CD8-positive, alpha-beta T cell (primary cell): ENCODE measurements at regions of chr6 and their contacts with region 1.

Region 1: DNA sequence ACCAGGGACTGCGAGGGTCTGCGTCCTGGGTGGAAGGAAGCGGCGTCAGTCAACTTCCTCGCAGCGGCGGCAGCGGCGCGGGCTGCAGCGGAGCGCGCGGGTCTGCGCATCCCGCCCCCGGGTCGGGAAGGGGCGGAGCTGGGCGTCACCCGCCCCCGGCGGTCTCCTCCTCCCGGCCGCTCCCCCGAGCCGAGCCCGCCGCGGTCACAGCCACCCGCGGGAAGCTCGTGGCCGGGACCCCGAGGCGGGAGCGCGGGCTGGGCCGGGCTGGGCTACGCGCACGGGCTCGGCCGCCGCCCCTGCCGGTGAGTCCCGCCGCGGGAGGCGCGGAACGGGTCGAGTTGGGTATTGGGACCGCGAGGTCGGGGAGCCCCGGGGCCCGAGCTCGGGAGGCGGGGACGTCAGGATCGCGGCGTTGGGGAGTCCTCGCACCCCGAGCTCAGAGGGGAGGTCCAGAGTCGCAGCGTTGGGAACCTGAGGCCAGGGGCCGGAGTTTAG is at the start of gene PAQR8:
- DNase-seq: peak; percentile 62 to 93 (median 80)
- ATAC-seq: peak; percentile 88
- H3K4me3 ChIP-seq: peak within 1 kb of the TSS; percentile 94 to 99
- H3K4me3 Mint-ChIP-seq: peak within 1 kb of the TSS; percentile 99
- H3K27ac ChIP-seq: peak within 1 kb of the TSS; percentile 72 to 86
- H3K27ac Mint-ChIP-seq: peak within 1 kb of the TSS; percentile 96
- H3K4me1 ChIP-seq: peaks cover 35% of the 10 kb centered on the region
- H3K4me1 Mint-ChIP-seq: peaks cover 44% of the 10 kb centered on the region
- H3K27me3 ChIP-seq: no peaks in the 10 kb centered on the region
- H3K27me3 Mint-ChIP-seq: no peaks in the 10 kb centered on the region
- CTCF ChIP-seq: no peak
- total RNA-seq, gene PAQR8: 1.8 to 2.2 TPM

Region 2: DNA sequence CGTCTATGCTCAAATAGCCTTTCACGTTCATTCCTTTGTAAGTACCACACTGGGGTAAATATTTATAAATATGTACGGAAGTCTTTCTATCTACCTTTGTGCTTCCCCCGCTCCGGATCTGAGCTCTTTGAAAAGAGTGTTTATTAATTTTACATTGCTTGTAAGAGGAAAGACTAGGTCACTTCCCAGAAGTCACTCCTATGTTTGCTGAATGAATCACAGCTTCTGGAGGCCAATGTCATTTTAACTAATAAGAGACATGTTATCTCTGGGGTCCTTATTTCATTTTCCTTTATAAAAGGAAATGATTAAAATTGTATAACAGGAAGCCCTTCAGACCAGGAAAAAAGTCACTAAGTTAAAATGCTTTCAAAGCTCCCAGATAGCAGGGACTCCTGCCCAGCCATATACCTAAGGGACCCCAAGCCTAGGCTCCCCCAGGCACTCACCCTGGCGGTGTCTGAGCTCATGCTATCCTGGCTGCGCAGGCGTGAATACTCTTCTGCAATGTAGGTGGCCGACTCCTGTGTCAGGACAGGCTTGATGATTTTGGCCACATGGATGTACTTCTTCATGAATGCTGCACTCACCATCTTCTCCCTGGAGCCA is 90.0 kb before region 1 on chr6:
- CTCF ChIA-PET with region 1: no interaction called
- POLR2A ChIA-PET with region 1: no interaction called
- intact Hi-C with region 1: no loop called
- DNase-seq: no peak
- ATAC-seq: no peak
- H3K4me3 ChIP-seq: no peak overlapping the region
- H3K4me3 Mint-ChIP-seq: no peak overlapping the region
- H3K27ac ChIP-seq: no peak overlapping the region
- H3K27ac Mint-ChIP-seq: no peak overlapping the region
- H3K4me1 ChIP-seq: no peaks in the 10 kb centered on the region
- H3K4me1 Mint-ChIP-seq: no peaks in the 10 kb centered on the region
- H3K27me3 ChIP-seq: no peaks in the 10 kb centered on the region
- H3K27me3 Mint-ChIP-seq: no peaks in the 10 kb centered on the region
- CTCF ChIP-seq: no peak

Region 3: DNA sequence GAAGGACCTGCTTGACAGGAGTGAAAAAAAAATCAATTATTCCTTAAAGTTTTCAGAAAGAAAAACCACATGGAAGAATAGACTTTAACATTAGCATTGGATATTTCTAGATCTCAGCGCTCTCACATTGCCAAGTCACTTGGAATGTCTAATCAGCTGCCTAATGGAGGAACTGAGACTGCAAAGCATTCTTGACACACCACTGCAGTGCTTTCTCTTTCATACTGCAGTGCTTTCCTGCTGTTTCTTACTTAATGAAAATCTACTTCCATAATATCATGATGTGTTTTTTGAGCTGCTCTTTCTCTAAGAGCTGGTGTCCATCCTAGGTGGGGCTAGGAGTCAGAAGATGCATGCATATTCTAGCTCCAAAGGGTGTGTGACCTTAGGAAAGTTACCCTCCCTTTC is 57.0 kb before region 1 on chr6:
- CTCF ChIA-PET with region 1: interaction called, 4 read pairs
- POLR2A ChIA-PET with region 1: interaction called, 17 read pairs
- intact Hi-C with region 1: loop called in 1 of 2 experiments (anchors 1 kb)
- DNase-seq: peak in 1 of 9 experiments; percentile 46
- ATAC-seq: peak; percentile 46
- H3K4me3 ChIP-seq: peak overlapping the region in 1 of 2 experiments; percentile 8
- H3K4me3 Mint-ChIP-seq: peak overlapping the region; percentile 58
- H3K27ac ChIP-seq: peak overlapping the region; percentile 38 to 78
- H3K27ac Mint-ChIP-seq: peak overlapping the region; percentile 88
- H3K4me1 ChIP-seq: peaks cover 71% of the 10 kb centered on the region
- H3K4me1 Mint-ChIP-seq: peaks cover 71% of the 10 kb centered on the region
- H3K27me3 ChIP-seq: no peaks in the 10 kb centered on the region
- H3K27me3 Mint-ChIP-seq: no peaks in the 10 kb centered on the region
- CTCF ChIP-seq: no peak

Region 4: DNA sequence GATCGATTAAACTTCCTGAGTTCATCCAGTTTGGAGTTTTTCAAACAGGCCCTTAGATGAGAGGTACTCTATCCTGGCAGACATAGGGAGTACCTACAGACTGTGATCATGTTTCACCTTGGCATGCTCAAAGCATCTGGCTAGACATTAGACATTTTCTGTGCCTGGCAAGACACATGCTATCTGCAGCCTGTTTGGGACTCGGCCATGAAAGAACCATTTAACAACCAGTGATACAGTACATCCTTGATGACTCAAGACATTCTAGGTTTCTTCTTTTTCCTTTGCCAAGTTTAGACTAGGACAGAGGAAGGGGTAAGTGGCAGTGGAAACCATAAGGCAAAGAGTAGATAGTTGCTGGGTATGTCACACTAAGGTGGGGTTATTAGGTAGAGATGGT is 15.5 kb before region 1 on chr6:
- CTCF ChIA-PET with region 1: interaction called, 3 read pairs
- POLR2A ChIA-PET with region 1: interaction called, 4 read pairs
- intact Hi-C with region 1: loop called in 1 of 2 experiments (anchors 2 kb)
- DNase-seq: no peak
- ATAC-seq: no peak
- H3K4me3 ChIP-seq: no peak overlapping the region
- H3K4me3 Mint-ChIP-seq: no peak overlapping the region
- H3K27ac ChIP-seq: no peak overlapping the region
- H3K27ac Mint-ChIP-seq: no peak overlapping the region
- H3K4me1 ChIP-seq: peaks cover 18% of the 10 kb centered on the region
- H3K4me1 Mint-ChIP-seq: peaks cover 26% of the 10 kb centered on the region
- H3K27me3 ChIP-seq: no peaks in the 10 kb centered on the region
- H3K27me3 Mint-ChIP-seq: no peaks in the 10 kb centered on the region
- CTCF ChIP-seq: no peak

Region 5: DNA sequence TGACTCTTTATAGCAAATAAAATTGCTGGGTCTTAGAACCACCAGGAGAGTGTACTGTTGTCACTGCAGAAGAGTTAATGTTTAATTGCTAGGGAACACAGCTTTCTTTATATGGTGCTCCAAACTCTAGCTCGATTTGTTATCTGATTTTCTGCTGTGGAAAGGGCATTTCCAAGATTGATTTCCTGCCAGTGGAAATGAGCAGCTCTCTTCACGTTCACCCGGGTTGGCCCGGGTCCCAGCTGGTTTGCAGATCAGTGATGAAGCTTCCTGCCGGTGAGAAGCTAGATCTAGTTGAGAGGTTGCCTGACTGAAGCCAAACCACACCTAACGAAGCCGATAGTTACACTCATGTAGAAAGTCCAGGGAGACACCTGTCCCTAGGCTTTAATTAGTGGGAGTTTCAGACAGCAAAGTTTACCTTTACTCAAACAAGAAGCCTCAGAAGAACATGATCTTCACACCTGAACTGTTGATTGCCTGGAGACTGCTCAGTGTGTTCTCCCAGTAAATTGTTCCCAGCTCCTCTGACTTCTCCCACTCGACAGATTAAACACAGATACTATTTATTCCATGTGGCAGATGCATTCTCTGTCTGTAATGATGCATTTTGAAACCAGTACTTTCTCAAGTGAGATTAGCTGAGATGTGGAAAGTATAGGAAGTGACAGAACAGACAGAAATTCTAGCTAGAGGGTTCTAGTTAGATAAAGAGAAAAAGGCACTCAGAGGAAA is 27.8 kb after region 1 on chr6:
- CTCF ChIA-PET with region 1: interaction called, 34 read pairs
- POLR2A ChIA-PET with region 1: interaction called, 47 read pairs
- intact Hi-C with region 1: loop called (anchors 1 kb)
- DNase-seq: peak in 8 of 9 experiments; percentile 37 to 84 (median 69)
- ATAC-seq: peak; percentile 39
- H3K4me3 ChIP-seq: peak overlapping the region; percentile 36 to 44
- H3K4me3 Mint-ChIP-seq: peak overlapping the region; percentile 83
- H3K27ac ChIP-seq: peak overlapping the region; percentile 78 to 79
- H3K27ac Mint-ChIP-seq: peak overlapping the region; percentile 98
- H3K4me1 ChIP-seq: peaks cover 71% of the 10 kb centered on the region
- H3K4me1 Mint-ChIP-seq: peaks cover 86% of the 10 kb centered on the region
- H3K27me3 ChIP-seq: no peaks in the 10 kb centered on the region
- H3K27me3 Mint-ChIP-seq: no peaks in the 10 kb centered on the region
- CTCF ChIP-seq: peak; percentile 30

Region 6: DNA sequence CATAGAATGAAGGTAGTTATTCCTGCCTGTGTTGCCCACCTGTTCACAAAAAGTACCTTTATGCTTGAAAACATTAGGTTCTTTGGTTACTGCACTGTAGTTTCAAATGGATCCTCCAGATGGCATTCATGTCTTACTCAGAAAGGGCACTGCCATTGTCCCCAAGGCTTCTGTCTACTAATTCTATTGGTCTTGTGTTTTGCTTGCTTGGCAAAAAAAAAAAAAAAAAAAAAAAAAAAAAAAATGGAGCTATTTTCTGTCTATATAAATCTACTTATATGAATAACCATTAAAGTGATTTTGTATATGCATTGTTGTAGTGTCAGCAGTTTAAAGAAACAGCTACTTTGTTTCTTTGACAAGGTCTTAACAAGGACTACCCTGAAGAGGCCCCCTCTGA is 45.5 kb after region 1 on chr6:
- CTCF ChIA-PET with region 1: interaction called, 10 read pairs
- POLR2A ChIA-PET with region 1: interaction called, 20 read pairs
- intact Hi-C with region 1: no loop called
- DNase-seq: peak in 2 of 9 experiments; percentile 53 to 68
- ATAC-seq: peak; percentile 93
- H3K4me3 ChIP-seq: no peak overlapping the region
- H3K4me3 Mint-ChIP-seq: no peak overlapping the region
- H3K27ac ChIP-seq: no peak overlapping the region
- H3K27ac Mint-ChIP-seq: peak overlapping the region; percentile 70
- H3K4me1 ChIP-seq: no peaks in the 10 kb centered on the region
- H3K4me1 Mint-ChIP-seq: peaks cover 38% of the 10 kb centered on the region
- H3K27me3 ChIP-seq: no peaks in the 10 kb centered on the region
- H3K27me3 Mint-ChIP-seq: no peaks in the 10 kb centered on the region
- CTCF ChIP-seq: peak; percentile 48

Region 7: DNA sequence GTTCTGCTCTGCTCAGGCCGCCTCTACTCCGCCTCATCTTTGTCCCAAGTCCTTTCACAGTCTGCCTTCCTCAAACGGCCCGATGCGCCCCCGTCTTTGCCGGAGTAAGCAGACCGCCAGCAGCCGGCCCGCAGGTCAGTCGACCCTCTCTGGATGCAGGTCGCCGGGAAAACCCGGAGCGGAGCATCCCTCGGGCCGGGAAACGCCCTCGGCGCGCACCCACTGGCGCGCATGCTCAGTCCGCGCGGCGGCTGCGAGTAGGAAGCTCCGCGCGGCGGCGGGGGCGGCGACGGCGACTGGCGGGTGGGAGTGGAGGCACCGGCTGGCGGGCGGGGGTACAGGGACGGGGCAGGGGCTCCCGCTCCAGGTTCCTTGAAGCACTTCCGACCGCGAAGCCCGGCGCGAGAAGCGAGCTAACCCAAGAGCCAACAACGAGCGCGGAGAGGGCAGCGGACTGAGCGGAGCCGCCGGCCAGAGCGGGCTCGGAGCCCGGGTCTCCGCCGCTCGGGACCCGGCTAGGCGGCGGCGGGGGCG is 1432.8 kb after region 1 on chr6 and contains the start of gene LRRC1:
- CTCF ChIA-PET with region 1: no interaction called
- POLR2A ChIA-PET with region 1: no interaction called
- intact Hi-C with region 1: loop called in 1 of 2 experiments (anchors 5 kb)
- DNase-seq: peak; percentile 59 to 90 (median 82)
- ATAC-seq: peak; percentile 64
- H3K4me3 ChIP-seq: peak within 1 kb of the TSS; percentile 88
- H3K4me3 Mint-ChIP-seq: peak within 1 kb of the TSS; percentile 96
- H3K27ac ChIP-seq: peak within 1 kb of the TSS; percentile 41 to 46
- H3K27ac Mint-ChIP-seq: peak within 1 kb of the TSS; percentile 87
- H3K4me1 ChIP-seq: peaks cover 13% of the 10 kb centered on the region
- H3K4me1 Mint-ChIP-seq: peaks cover 27% of the 10 kb centered on the region
- H3K27me3 ChIP-seq: no peaks in the 10 kb centered on the region
- H3K27me3 Mint-ChIP-seq: peaks cover 19% of the 10 kb centered on the region
- CTCF ChIP-seq: no peak
- total RNA-seq, gene LRRC1: 0.47 to 0.87 TPM